ENCODE measurements at regions of chr17 and their contacts with region 1.

Region 1: GRCh38 chr17:51153210-51154072 is at the start of gene NME1:
- DNase-seq: peak; percentile 100
- ATAC-seq: peak; percentile 92
- H3K4me3 ChIP-seq: peak within 1 kb of the TSS; percentile 74 to 82
- H3K27ac ChIP-seq: peak within 1 kb of the TSS; percentile 69
- H3K4me1 ChIP-seq: peaks cover 14 to 22% of the 10 kb centered on the region in 2 experiments
- H3K27me3 ChIP-seq: no peaks in the 10 kb centered on the region
- CTCF ChIP-seq: peak; percentile 97 to 100 (median 98)
- POLR2A ChIP-seq: peak; percentile 78
- RAD21 ChIP-seq: peak; percentile 100
- total RNA-seq, gene NME1: 510 TPM

Region 2: DNA sequence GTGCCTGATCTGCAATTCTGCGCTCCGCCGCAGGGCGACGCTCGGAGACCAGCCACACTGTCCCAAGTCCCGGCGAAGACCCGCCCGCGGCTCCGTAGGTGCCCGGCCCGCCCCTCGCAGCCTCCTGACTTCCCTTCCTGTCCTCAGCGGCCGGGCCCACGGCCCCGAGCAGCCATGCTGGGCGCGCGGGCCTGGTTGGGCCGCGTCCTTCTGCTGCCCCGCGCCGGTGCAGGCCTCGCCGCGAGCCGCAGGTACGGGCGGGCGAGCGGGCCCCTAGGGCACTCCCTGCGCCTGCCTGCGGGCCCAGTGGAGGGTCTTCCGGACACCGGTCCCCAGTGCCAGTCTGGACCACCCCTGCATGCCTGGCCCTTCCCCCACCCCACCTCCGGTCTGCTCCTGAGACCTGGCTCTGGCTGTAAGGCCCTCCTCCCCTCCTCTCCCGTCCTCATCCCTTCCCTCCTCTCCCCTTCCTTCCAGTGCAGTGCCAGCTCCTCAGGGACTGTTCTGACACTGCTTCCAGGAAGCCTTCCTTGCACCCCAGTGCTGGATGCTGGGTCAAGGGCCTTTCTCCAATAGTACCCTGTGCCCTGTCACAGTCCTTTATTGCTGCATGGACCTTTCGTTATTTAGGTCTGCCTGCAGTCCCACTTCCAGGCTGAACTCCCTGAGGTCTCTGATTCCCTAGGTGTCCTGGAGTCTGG is 606.3 kb before region 1 on chr17 and contains the start of gene SPATA20:
- CTCF ChIA-PET with region 1: no interaction called
- POLR2A ChIA-PET with region 1: no interaction called
- RAD21 ChIA-PET with region 1: no interaction called
- intact Hi-C with region 1: loop called (anchors 10 kb)
- DNase-seq: peak; percentile 80
- ATAC-seq: peak; percentile 75
- H3K4me3 ChIP-seq: peak within 1 kb of the TSS; percentile 65 to 85
- H3K27ac ChIP-seq: peak within 1 kb of the TSS; percentile 75
- H3K4me1 ChIP-seq: peaks cover 27 to 58% of the 10 kb centered on the region in 2 experiments
- H3K27me3 ChIP-seq: no peaks in the 10 kb centered on the region
- CTCF ChIP-seq: peak in 2 of 3 experiments; percentile 98 to 100; a peak in 4 of 6 replicates
- POLR2A ChIP-seq: peak; percentile 79
- RAD21 ChIP-seq: no peak
- total RNA-seq, gene SPATA20: 57.5 TPM

Region 3: DNA sequence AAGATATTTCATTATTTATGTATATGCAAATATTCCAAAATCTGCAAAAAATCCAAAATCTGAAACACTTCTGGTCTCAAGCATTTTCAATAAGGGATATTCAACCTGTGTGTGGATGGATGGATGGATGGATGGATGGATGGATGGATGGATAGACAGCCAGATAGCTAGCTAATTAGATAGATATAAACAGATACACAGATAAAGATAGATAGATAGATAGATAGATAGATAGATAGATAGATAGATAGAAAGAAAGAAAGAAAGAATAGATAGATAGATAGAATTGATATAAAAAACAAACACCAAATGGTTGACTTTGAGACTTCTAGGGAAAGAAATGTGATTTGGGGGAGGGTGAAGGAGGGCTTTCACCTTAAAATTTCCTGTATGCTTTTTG is 172.2 kb before region 1 on chr17:
- CTCF ChIA-PET with region 1: no interaction called
- POLR2A ChIA-PET with region 1: no interaction called
- RAD21 ChIA-PET with region 1: no interaction called
- intact Hi-C with region 1: loop called (anchors 5 kb)
- DNase-seq: no peak
- ATAC-seq: no peak
- H3K4me3 ChIP-seq: no peak overlapping the region
- H3K27ac ChIP-seq: no peak overlapping the region
- H3K4me1 ChIP-seq: no peaks in the 10 kb centered on the region
- H3K27me3 ChIP-seq: no peaks in the 10 kb centered on the region
- CTCF ChIP-seq: no peak
- POLR2A ChIP-seq: no peak
- RAD21 ChIP-seq: no peak

Region 4: DNA sequence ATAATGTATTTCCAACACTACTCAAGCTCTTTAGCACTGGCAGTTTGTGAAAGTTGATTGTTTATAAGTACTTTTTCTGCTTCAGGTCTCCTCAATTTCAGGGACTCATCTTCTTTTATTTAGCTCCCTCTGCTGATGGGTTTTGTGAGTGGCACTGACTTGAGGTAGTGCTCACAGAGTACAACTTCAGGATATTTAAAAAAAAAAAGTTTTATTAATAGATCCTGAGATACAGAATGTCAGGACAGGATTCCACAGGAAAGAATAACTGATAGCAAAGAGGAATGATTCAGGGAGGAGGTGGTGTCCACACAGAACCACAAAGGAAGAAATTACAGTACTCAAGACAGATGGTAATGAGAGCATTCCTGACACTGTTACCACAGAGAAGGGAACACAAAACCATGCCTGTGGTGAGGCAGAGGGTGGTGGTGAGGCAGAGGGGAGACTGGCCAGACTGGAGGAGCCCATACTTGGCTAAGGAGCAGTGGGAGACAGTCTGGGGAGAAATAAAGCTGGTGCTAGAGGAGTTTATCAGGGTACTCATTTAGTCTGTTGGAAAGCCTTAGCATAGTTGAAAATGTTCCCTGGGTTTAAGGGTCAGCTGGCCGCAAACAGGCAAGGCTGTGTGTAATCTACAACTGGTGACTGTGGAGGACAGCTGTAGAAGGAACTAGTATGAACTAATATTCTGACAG is 96.5 kb before region 1 on chr17:
- CTCF ChIA-PET with region 1: interaction called, 11 read pairs
- POLR2A ChIA-PET with region 1: no interaction called
- RAD21 ChIA-PET with region 1: no interaction called
- intact Hi-C with region 1: loop called (anchors 5 kb)
- DNase-seq: peak; percentile 32
- ATAC-seq: peak; percentile 87
- H3K4me3 ChIP-seq: no peak overlapping the region
- H3K27ac ChIP-seq: no peak overlapping the region
- H3K4me1 ChIP-seq: peaks cover 4 to 25% of the 10 kb centered on the region in 2 experiments; a peak in 3 of 4 replicates
- H3K27me3 ChIP-seq: no peaks in the 10 kb centered on the region
- CTCF ChIP-seq: peak; percentile 50 to 73 (median 73); a peak in 5 of 6 replicates
- POLR2A ChIP-seq: no peak
- RAD21 ChIP-seq: peak; percentile 72

Region 5: GRCh38 chr17:51132964-51133319 is 20.5 kb before region 1 on chr17:
- CTCF ChIA-PET with region 1: interaction called, 15 read pairs
- POLR2A ChIA-PET with region 1: interaction called, 5 read pairs
- RAD21 ChIA-PET with region 1: no interaction called
- intact Hi-C with region 1: no loop called
- DNase-seq: no peak
- ATAC-seq: peak; percentile 61
- H3K4me3 ChIP-seq: peak overlapping the region in 1 of 2 experiments; percentile 10; a peak in 2 of 4 replicates
- H3K27ac ChIP-seq: no peak overlapping the region
- H3K4me1 ChIP-seq: peaks cover 10 to 25% of the 10 kb centered on the region in 2 experiments
- H3K27me3 ChIP-seq: no peaks in the 10 kb centered on the region
- CTCF ChIP-seq: no peak
- POLR2A ChIP-seq: no peak
- RAD21 ChIP-seq: no peak

Region 6: GRCh38 chr17:51251010-51251409 is 97.6 kb after region 1 on chr17:
- CTCF ChIA-PET with region 1: no interaction called
- POLR2A ChIA-PET with region 1: no interaction called
- RAD21 ChIA-PET with region 1: no interaction called
- intact Hi-C with region 1: no loop called
- DNase-seq: no peak
- ATAC-seq: no peak
- H3K4me3 ChIP-seq: no peak overlapping the region
- H3K27ac ChIP-seq: no peak overlapping the region
- H3K4me1 ChIP-seq: peaks cover 9 to 22% of the 10 kb centered on the region in 2 experiments
- H3K27me3 ChIP-seq: no peaks in the 10 kb centered on the region
- CTCF ChIP-seq: no peak
- POLR2A ChIP-seq: no peak
- RAD21 ChIP-seq: no peak

Region 7: DNA sequence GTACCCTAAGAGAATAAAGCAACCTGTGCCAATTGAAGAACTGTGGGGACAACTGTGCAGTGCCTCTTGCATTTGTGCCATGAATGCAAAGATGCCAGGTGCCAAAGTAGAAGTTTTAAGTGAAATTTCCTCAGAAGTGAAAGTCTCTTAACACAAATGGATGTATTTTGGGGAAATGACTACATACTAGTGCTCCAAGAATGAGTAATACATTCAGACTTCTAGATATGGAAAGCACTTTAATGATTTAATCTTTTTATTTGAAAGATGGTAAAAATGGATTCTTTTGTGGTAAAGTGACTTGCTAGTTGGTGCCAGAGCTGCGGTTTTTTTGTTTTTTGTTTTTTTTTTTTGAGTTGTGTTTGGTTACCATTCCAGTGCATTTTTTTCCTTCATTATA is 121.9 kb after region 1 on chr17:
- CTCF ChIA-PET with region 1: no interaction called
- POLR2A ChIA-PET with region 1: no interaction called
- RAD21 ChIA-PET with region 1: no interaction called
- intact Hi-C with region 1: no loop called
- DNase-seq: no peak
- ATAC-seq: no peak
- H3K4me3 ChIP-seq: no peak overlapping the region
- H3K27ac ChIP-seq: no peak overlapping the region
- H3K4me1 ChIP-seq: no peaks in the 10 kb centered on the region
- H3K27me3 ChIP-seq: no peaks in the 10 kb centered on the region
- CTCF ChIP-seq: no peak
- POLR2A ChIP-seq: no peak
- RAD21 ChIP-seq: no peak

Region 8: DNA sequence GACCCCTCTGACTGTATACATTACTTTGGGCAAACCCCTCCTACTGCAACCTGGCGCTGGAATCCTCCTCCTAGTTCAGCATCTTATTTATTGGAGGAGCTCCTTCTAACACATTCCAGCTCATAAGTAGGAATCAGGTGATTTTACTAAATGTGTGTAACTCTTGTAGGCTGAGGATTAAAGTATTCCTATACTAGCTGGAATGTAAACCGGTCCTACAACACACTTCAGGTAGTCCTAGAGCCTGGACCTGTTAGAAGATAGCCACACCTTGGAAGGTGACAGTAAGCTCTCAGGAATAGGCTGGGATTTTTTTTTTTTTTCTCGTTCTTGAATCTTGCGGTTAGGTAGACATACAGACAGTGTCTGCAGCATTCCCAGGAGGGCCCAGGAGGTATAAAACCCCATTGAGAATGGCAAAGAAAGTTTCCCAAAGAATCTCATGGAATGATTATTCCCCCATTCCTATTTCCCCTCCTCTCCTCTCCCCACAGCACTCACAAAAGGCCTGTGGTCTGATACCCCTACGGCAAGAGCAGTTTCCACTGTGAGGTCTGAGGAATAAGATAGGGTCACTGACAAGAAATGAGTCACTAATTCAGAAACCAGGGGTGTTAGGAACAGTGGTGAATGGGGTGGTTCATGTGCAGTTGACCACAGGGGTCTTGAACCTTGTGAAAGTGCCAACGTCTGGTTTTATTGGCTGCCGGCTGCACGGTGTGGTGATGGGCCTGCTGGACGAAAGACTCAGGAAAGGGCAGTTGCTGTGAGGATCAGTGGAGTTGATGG is 373.9 kb after region 1 on chr17:
- CTCF ChIA-PET with region 1: no interaction called
- POLR2A ChIA-PET with region 1: no interaction called
- RAD21 ChIA-PET with region 1: no interaction called
- intact Hi-C with region 1: no loop called
- DNase-seq: no peak
- ATAC-seq: no peak
- H3K4me3 ChIP-seq: no peak overlapping the region
- H3K27ac ChIP-seq: no peak overlapping the region
- H3K4me1 ChIP-seq: no peaks in the 10 kb centered on the region
- H3K27me3 ChIP-seq: peaks cover 59% of the 10 kb centered on the region
- CTCF ChIP-seq: no peak
- POLR2A ChIP-seq: no peak
- RAD21 ChIP-seq: no peak

Measured in HCT116 (cell line).